Activated T-helper 1 cell treated with anti-CD3 and anti-CD28 coated beads, Interleukin-12 subunit alpha, Interleukin-12 subunit beta, Interleukin-2, Interleukin-4 antibody, amounts not matched to agents 30 ng/mL and 10 ng/mL and 1 ng/mL, durations not matched to agents 14 hours and 24 hours and 36 hours (primary cell): ENCODE measurements at regions of chr16 and their contacts with region 1.

Region 1: DNA sequence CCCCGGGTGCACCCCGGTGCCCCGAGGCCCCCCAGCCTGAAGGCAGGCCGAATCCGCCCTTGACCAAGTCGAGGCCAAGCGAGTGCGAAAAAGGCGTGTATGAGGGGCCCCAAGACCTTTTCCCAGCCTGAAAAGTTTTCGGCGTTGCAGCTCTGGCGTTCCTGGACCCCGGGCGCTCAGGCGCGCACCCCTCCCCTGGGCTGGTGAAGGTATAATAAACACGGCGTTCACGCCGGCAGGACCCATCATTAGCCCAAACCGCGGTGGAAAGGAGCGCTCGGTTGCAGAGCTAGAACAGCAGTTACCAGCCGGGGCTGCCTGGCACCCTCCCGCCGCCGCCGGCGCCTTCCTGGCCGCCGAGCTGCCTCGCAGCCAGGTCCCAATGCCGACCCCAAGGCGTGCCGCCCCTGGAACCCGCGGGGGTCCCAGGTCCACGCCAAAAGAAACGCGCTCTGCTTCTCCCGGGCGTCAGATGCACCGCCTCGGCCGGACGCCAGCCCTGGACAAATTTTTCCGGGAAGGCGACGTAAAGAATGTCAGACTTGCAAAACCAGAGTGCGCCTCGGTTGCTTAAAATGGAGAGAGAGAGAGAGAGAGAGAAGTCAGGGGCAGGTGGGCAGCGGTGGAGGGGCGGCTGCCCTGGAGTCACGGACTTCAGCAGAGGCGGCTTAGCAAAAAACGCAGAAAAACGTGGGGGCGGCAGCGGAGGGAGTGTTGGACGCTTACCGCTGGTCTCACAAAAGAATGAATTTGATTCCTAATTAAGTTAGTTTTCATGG is 11.5 kb upstream of the FOXF1 start:
- DNase-seq: no peak
- H3K4me3 Mint-ChIP-seq: no peak overlapping the region
- H3K27ac Mint-ChIP-seq: peak overlapping the region; percentile 48
- H3K4me1 Mint-ChIP-seq: no peaks in the 10 kb centered on the region
- H3K27me3 Mint-ChIP-seq: peaks cover 80% of the 10 kb centered on the region

Region 2: GRCh38 chr16:86227801-86228200 is 271.0 kb before region 1 on chr16:
- intact Hi-C with region 1: no loop called
- DNase-seq: no peak
- H3K4me3 Mint-ChIP-seq: no peak overlapping the region
- H3K27ac Mint-ChIP-seq: no peak overlapping the region
- H3K4me1 Mint-ChIP-seq: no peaks in the 10 kb centered on the region
- H3K27me3 Mint-ChIP-seq: no peaks in the 10 kb centered on the region

Region 3: GRCh38 chr16:86285938-86286921 is 212.6 kb before region 1 on chr16:
- intact Hi-C with region 1: loop called (anchors 5 kb)
- DNase-seq: no peak
- H3K4me3 Mint-ChIP-seq: no peak overlapping the region
- H3K27ac Mint-ChIP-seq: no peak overlapping the region
- H3K4me1 Mint-ChIP-seq: no peaks in the 10 kb centered on the region
- H3K27me3 Mint-ChIP-seq: peaks cover 55% of the 10 kb centered on the region